GM12878 (cell line): ENCODE measurements at regions of chr3 and their contacts with region 1.

Region 1: DNA sequence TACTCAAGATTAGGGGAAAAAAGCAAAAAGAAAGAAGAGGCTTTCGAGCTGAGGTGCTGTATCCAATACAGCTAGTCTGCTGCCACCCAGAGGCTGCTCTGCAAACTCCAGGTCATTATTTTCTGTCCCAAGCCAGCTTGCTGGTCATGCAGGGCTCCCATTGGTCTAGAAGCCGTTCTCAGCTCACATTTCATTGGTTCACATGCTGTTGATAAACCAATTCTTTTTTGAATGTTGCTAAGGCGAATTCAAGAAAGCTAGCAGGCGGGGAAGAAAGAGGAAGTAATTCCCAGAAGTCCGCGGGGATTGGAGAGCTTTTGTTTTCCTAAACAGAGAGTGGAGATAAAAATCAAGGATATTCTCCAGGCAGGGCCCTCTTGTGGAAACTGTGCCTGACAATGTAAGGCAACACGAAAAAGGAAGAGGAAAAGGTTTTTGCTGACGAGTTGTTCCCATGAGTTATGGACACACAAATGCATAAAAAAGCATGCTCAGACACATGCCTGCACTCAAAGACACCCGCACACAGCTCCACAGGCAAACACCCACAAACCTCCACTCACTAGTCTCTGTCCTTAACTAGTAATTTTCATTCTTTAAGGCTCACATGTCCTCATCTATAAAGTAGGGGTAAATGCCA is 33.4 kb downstream of the FSTL1 start:
- DNase-seq: peak; percentile 90
- ATAC-seq: peak; percentile 99
- H3K4me3 ChIP-seq: peak overlapping the region; percentile 66; the same call in 1 of the 2 replicates
- H3K27ac ChIP-seq: no peak overlapping the region
- H3K4me1 ChIP-seq: no peaks in the 10 kb centered on the region; the same call in 1 of the 2 replicates
- H3K27me3 ChIP-seq: peaks cover 0 to 5% of the 10 kb centered on the region in 2 experiments; a peak in 2 of 4 replicates
- CTCF ChIP-seq: peak; percentile 69 to 97 (median 93); a peak in 5 of 6 replicates
- EP300 ChIP-seq: no peak
- POLR2A ChIP-seq: no peak
- RAD21 ChIP-seq: peak; percentile 85

Region 2: GRCh38 chr3:119891944-119892721 is 525.3 kb before region 1 on chr3:
- CTCF ChIA-PET with region 1: interaction called, 36 read pairs
- POLR2A ChIA-PET with region 1: no interaction called
- RAD21 ChIA-PET with region 1: interaction called, 17 read pairs
- SMC1A ChIA-PET with region 1: interaction called, 27 read pairs
- in situ Hi-C with region 1: loop called (anchors 10 kb)
- intact Hi-C with region 1: loop called (anchors 5 kb)
- DNase-seq: peak; percentile 30
- ATAC-seq: peak; percentile 88
- H3K4me3 ChIP-seq: no peak overlapping the region
- H3K27ac ChIP-seq: no peak overlapping the region
- H3K4me1 ChIP-seq: no peaks in the 10 kb centered on the region
- H3K27me3 ChIP-seq: no peaks in the 10 kb centered on the region
- CTCF ChIP-seq: peak; percentile 57 to 70 (median 66)
- EP300 ChIP-seq: no peak
- POLR2A ChIP-seq: no peak
- RAD21 ChIP-seq: peak; percentile 97

Region 3: GRCh38 chr3:120239644-120240043 is 177.7 kb before region 1 on chr3:
- CTCF ChIA-PET with region 1: interaction called, 210 read pairs
- POLR2A ChIA-PET with region 1: interaction called, 4 read pairs
- RAD21 ChIA-PET with region 1: interaction called, 75 read pairs
- SMC1A ChIA-PET with region 1: interaction called, 90 read pairs
- in situ Hi-C with region 1: loop called (anchors 5 kb)
- intact Hi-C with region 1: loop called (anchors 1 kb)
- DNase-seq: no peak
- ATAC-seq: no peak
- H3K4me3 ChIP-seq: no peak overlapping the region
- H3K27ac ChIP-seq: no peak overlapping the region
- H3K4me1 ChIP-seq: no peaks in the 10 kb centered on the region
- H3K27me3 ChIP-seq: no peaks in the 10 kb centered on the region
- CTCF ChIP-seq: no peak
- EP300 ChIP-seq: no peak
- POLR2A ChIP-seq: no peak
- RAD21 ChIP-seq: no peak

Region 4: DNA sequence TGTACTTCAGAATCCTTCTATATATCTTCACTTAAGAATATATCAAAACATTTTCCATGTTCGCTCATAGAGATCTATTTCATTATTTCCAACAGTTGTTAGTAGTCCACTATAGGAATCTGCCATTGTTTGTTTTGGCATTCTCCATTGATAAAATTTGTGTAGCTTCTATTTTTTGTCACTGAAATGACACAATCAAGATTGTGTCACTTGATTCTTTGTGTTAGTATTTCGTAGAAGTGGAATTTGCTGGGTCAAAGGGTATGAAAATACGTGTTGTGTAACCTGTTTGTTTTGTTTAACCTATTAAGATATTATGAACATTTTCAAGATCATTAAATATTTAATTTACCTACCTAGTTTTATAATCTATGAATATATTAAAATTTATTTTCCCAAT is 116.4 kb before region 1 on chr3:
- CTCF ChIA-PET with region 1: interaction called, 4 read pairs
- POLR2A ChIA-PET with region 1: no interaction called
- RAD21 ChIA-PET with region 1: no interaction called
- SMC1A ChIA-PET with region 1: interaction called, 12 read pairs
- in situ Hi-C with region 1: no loop called
- intact Hi-C with region 1: no loop called
- DNase-seq: no peak
- ATAC-seq: no peak
- H3K4me3 ChIP-seq: no peak overlapping the region
- H3K27ac ChIP-seq: no peak overlapping the region
- H3K4me1 ChIP-seq: no peaks in the 10 kb centered on the region
- H3K27me3 ChIP-seq: no peaks in the 10 kb centered on the region
- CTCF ChIP-seq: no peak
- EP300 ChIP-seq: no peak
- POLR2A ChIP-seq: no peak
- RAD21 ChIP-seq: no peak

Region 5: DNA sequence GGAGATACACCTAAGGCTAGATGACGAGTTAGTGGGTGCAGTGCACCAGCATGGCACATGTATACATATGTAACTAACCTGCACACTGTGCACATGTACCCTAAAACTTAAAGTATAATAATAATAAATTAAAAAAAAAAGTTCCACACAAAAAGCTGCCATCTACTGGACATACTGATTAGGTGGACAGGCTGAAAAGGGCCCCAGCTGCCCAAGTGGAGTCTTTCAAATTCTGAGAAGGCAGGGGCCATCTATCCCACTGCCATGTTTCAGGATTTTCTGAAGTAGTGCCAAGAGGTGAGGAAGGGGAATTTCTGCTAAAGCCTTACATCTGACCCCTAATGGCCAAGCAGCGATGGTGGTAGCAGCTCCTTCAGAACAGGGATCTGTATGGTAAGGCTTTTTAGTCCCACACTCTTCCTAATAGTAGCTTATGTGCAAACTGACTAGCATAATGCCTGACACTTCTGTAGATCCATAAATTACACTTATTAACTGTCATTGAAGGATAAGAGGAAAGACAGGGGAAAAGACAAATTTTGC is 25.7 kb after region 1 on chr3:
- CTCF ChIA-PET with region 1: interaction called, 14 read pairs
- POLR2A ChIA-PET with region 1: no interaction called
- RAD21 ChIA-PET with region 1: interaction called, 9 read pairs
- SMC1A ChIA-PET with region 1: no interaction called
- in situ Hi-C with region 1: no loop called
- intact Hi-C with region 1: no loop called
- DNase-seq: no peak
- ATAC-seq: no peak
- H3K4me3 ChIP-seq: no peak overlapping the region
- H3K27ac ChIP-seq: no peak overlapping the region
- H3K4me1 ChIP-seq: no peaks in the 10 kb centered on the region
- H3K27me3 ChIP-seq: peaks cover 0 to 2% of the 10 kb centered on the region in 2 experiments; a peak in 3 of 4 replicates
- CTCF ChIP-seq: no peak
- EP300 ChIP-seq: no peak
- POLR2A ChIP-seq: no peak
- RAD21 ChIP-seq: no peak

Region 6: DNA sequence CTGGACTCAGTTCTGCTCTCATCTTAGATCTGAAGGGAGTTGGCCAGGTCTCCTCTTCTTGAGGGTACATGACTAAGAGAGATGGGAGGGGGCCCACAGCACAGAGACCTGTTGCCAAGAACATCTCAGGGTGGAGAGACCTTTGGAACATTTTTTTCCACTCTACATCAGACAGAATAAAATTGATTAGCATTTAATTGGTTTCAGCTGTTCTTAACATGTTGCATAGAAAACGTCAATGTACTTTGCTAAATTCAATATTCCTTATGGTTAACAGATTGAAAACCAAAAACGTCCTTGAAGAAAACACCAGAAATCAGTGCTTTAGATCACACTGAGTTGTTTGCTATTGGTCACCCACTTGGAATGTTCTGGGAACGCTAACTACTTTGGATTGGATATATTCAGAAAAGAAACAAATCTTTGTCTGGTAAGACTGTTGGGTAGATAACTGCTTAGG is 69.8 kb after region 1 on chr3:
- CTCF ChIA-PET with region 1: no interaction called
- POLR2A ChIA-PET with region 1: no interaction called
- RAD21 ChIA-PET with region 1: no interaction called
- SMC1A ChIA-PET with region 1: no interaction called
- in situ Hi-C with region 1: no loop called
- intact Hi-C with region 1: no loop called
- DNase-seq: no peak
- ATAC-seq: no peak
- H3K4me3 ChIP-seq: no peak overlapping the region
- H3K27ac ChIP-seq: no peak overlapping the region
- H3K4me1 ChIP-seq: no peaks in the 10 kb centered on the region
- H3K27me3 ChIP-seq: no peaks in the 10 kb centered on the region
- CTCF ChIP-seq: no peak
- EP300 ChIP-seq: no peak
- POLR2A ChIP-seq: no peak
- RAD21 ChIP-seq: no peak

Region 7: GRCh38 chr3:120558771-120559241 is 141.4 kb after region 1 on chr3:
- CTCF ChIA-PET with region 1: interaction called, 107 read pairs
- POLR2A ChIA-PET with region 1: no interaction called
- RAD21 ChIA-PET with region 1: interaction called, 82 read pairs
- SMC1A ChIA-PET with region 1: interaction called, 32 read pairs
- in situ Hi-C with region 1: loop called (anchors 5 kb)
- intact Hi-C with region 1: loop called (anchors 1 kb)
- DNase-seq: peak; percentile 33
- ATAC-seq: peak; percentile 93
- H3K4me3 ChIP-seq: peak overlapping the region; percentile 55; the same call in 1 of the 2 replicates
- H3K27ac ChIP-seq: no peak overlapping the region
- H3K4me1 ChIP-seq: peaks cover 3% of the 10 kb centered on the region; the same call in 1 of the 2 replicates
- H3K27me3 ChIP-seq: no peaks in the 10 kb centered on the region
- CTCF ChIP-seq: peak; percentile 88 to 95 (median 95)
- EP300 ChIP-seq: peak in 1 of 2 experiments; percentile 43; a peak in 1 of 4 replicates
- POLR2A ChIP-seq: no peak
- RAD21 ChIP-seq: peak; percentile 84

Region 8: GRCh38 chr3:120596116-120596852 is 178.9 kb after region 1 on chr3 and contains the start of gene NDUFB4:
- CTCF ChIA-PET with region 1: interaction called, 18 read pairs
- POLR2A ChIA-PET with region 1: no interaction called
- RAD21 ChIA-PET with region 1: interaction called, 3 read pairs
- SMC1A ChIA-PET with region 1: interaction called, 3 read pairs
- in situ Hi-C with region 1: no loop called
- intact Hi-C with region 1: no loop called
- DNase-seq: peak; percentile 98
- ATAC-seq: peak; percentile 96
- H3K4me3 ChIP-seq: peak within 1 kb of the TSS; percentile 98
- H3K27ac ChIP-seq: peak within 1 kb of the TSS; percentile 97
- H3K4me1 ChIP-seq: no peaks in the 10 kb centered on the region; the same call in 1 of the 2 replicates
- H3K27me3 ChIP-seq: no peaks in the 10 kb centered on the region
- CTCF ChIP-seq: no peak
- EP300 ChIP-seq: no peak
- POLR2A ChIP-seq: peak; percentile 90
- RAD21 ChIP-seq: no peak
- polyA plus RNA-seq, gene NDUFB4: 732 to 864 TPM